Heart left ventricle (tissue), 16 donors: ENCODE measurements at regions of chr20 and their contacts with region 1.

Region 1: DNA sequence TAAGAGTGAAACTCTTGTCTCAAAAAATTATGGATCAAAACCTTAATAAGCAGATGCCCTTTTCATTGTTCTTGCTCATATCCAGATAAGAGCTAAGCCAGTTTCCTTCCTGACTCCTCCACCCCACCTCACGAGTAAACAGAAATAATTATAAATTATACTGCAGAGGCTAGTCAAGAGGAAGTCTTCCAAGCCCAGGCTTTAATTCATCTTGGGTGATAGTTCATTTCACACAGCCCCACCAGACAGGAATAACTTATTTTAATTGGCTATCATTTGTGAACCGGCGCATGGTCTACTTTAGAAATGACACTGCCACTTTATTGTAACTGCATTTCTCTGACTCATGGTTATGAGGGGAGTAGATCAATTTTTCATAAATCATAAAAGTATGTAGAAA is 102.0 kb downstream of the BTBD3 start:
- DNase-seq: no peak
- ATAC-seq: peak in 1 of 4 donors; percentile 24
- H3K4me3 ChIP-seq: no peak overlapping the region
- H3K27ac ChIP-seq: no peak overlapping the region
- H3K4me1 ChIP-seq: peaks cover 0 to 13% (median 6%) of the 10 kb centered on the region in 12 donors
- H3K27me3 ChIP-seq: no peaks in the 10 kb centered on the region
- CTCF ChIP-seq: no peak
- POLR2A ChIP-seq: no peak

Region 2: DNA sequence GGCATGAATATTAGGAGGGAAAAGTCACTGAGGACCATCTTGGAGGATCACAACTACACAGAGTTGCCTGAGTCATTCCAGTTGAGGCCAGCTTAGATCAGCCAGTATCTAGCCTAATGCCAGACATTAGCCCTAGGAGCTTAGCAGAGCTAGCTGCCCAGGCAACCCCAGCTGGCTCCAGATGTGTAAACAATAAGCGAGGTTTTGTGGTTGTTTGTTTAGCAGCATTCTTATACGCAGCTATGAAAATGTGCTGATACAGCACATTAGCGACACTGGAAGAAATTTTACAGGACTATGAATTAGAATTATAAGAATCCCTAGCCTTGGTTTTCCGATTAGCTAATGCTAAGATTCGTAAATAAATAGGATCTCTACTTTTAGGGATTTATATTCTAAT is 42.7 kb before region 1 on chr20:
- intact Hi-C with region 1: no loop called
- DNase-seq: no peak
- ATAC-seq: no peak
- H3K4me3 ChIP-seq: no peak overlapping the region
- H3K27ac ChIP-seq: no peak overlapping the region
- H3K4me1 ChIP-seq: peaks cover 0 to 11% (median 0%) of the 10 kb centered on the region in 12 donors
- H3K27me3 ChIP-seq: no peaks in the 10 kb centered on the region
- CTCF ChIP-seq: no peak
- POLR2A ChIP-seq: no peak

Region 3: DNA sequence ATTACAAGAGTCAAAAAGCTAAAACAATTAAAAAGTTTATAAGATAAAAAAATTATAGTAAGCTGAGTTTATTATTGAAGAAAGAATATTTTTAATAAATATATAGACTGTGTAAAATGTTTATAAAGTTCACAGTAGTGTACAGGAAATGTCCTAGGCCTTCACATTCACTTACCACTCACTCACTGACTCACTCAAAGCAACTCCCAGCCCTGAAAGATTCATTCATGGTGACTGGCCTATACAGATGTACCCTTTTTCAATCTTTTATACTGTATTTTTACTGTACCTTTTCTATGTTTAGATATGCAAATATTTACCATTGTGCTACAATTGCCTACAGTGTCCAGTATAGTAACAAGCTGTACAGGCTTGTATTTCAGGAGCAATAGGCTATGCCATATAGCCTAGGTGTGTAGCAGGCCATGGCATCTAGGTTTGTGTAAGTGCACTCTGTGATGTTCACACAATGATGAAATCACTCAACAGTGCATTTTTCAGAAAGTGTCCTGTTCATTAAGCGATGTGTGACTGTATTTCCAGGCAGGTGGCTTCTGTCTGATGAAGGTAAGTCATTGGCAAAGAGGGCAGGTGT is 28.2 kb after region 1 on chr20:
- intact Hi-C with region 1: loop called in 1 of 10 experiments (anchors 2 kb)
- DNase-seq: no peak
- ATAC-seq: no peak
- H3K4me3 ChIP-seq: no peak overlapping the region
- H3K27ac ChIP-seq: no peak overlapping the region
- H3K4me1 ChIP-seq: peaks cover 0 to 1% (median 0%) of the 10 kb centered on the region in 12 donors
- H3K27me3 ChIP-seq: no peaks in the 10 kb centered on the region
- CTCF ChIP-seq: no peak
- POLR2A ChIP-seq: no peak

Region 4: GRCh38 chr20:12113468-12114371 is 94.0 kb after region 1 on chr20:
- intact Hi-C with region 1: loop called in 1 of 10 experiments (anchors 5 kb)
- DNase-seq: peak in 4 of 5 donors; percentile 39 to 51 (median 44)
- ATAC-seq: peak; percentile 78 to 94 (median 90)
- H3K4me3 ChIP-seq: peak overlapping the region in 1 of 12 donors; percentile 4
- H3K27ac ChIP-seq: peak overlapping the region in 10 of 12 donors; percentile 14 to 65 (median 39)
- H3K4me1 ChIP-seq: peaks cover 0 to 19% (median 5%) of the 10 kb centered on the region in 12 donors
- H3K27me3 ChIP-seq: no peaks in the 10 kb centered on the region
- CTCF ChIP-seq: peak in 1 of 12 donors; percentile 8
- POLR2A ChIP-seq: no peak